ENCODE measurements at regions of chr4 and their contacts with region 1.

Region 1: GRCh38 chr4:2963175-2963965 is at the starts of genes GRK4 and NOP14:
- DNase-seq: peak; percentile 92
- ATAC-seq: peak; percentile 92
- H3K4me3 ChIP-seq: peak within 1 kb of the TSS; percentile 78
- H3K27ac ChIP-seq: peak within 1 kb of the TSS; percentile 91
- H3K4me1 ChIP-seq: peaks cover 15% of the 10 kb centered on the region
- H3K27me3 ChIP-seq: no peaks in the 10 kb centered on the region
- CTCF ChIP-seq: peak in 2 of 3 experiments; percentile 9 to 23; a peak in 3 of 6 replicates
- EP300 ChIP-seq: 0 out of 4 replicates have a peak, but pooled peaks of 1 of the 2 experiments have one; percentile 22
- POLR2A ChIP-seq: peak; percentile 90
- RAD21 ChIP-seq: no peak
- polyA plus RNA-seq, gene GRK4: 1.1 to 1.6 TPM
- polyA plus RNA-seq, gene NOP14: 13.8 to 24.7 TPM

Region 2: GRCh38 chr4:2281575-2282343 is 681.6 kb before region 1 on chr4:
- CTCF ChIA-PET with region 1: no interaction called
- POLR2A ChIA-PET with region 1: no interaction called
- RAD21 ChIA-PET with region 1: no interaction called
- SMC1A ChIA-PET with region 1: no interaction called
- in situ Hi-C with region 1: no loop called
- intact Hi-C with region 1: no loop called
- DNase-seq: peak; percentile 41
- ATAC-seq: peak; percentile 91
- H3K4me3 ChIP-seq: no peak overlapping the region
- H3K27ac ChIP-seq: no peak overlapping the region
- H3K4me1 ChIP-seq: peaks cover 7% of the 10 kb centered on the region
- H3K27me3 ChIP-seq: no peaks in the 10 kb centered on the region
- CTCF ChIP-seq: peak; percentile 15 to 27 (median 24); a peak in 4 of 6 replicates
- EP300 ChIP-seq: no peak; a peak in 1 of 4 replicates
- POLR2A ChIP-seq: 0 out of 2 replicates have a peak, but pooled peaks have one; percentile 30
- RAD21 ChIP-seq: peak; percentile 36; the same call in 1 of the 2 replicates

Region 3: DNA sequence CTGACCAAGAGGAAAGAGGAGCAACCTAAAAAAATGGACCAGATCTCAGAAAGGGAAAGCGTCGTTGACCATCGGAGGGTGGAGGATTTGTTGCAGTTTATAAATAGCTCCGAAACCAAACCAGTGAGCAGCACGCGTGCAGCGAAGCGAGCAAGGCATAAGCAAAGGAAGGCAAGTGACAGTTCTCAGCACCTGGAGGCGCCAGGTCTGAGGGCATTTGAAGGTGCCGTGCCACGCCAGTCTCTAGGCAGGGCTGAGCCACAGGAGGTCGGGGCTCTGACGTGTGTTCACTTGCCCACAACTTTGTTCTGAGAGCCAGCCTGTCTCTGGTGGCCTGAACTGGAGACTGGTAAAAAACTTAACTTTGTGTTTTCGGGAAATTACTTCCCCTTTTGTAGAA is 266.9 kb before region 1 on chr4:
- CTCF ChIA-PET with region 1: interaction called, 3 read pairs
- POLR2A ChIA-PET with region 1: no interaction called
- RAD21 ChIA-PET with region 1: no interaction called
- SMC1A ChIA-PET with region 1: no interaction called
- in situ Hi-C with region 1: no loop called
- intact Hi-C with region 1: loop called (anchors 5 kb)
- DNase-seq: peak; percentile 96
- ATAC-seq: peak; percentile 97
- H3K4me3 ChIP-seq: peak overlapping the region; percentile 22; the same call in 1 of the 2 replicates
- H3K27ac ChIP-seq: peak overlapping the region; percentile 90
- H3K4me1 ChIP-seq: peaks cover 32% of the 10 kb centered on the region
- H3K27me3 ChIP-seq: no peaks in the 10 kb centered on the region
- CTCF ChIP-seq: peak; percentile 13 to 49 (median 27); a peak in 3 of 6 replicates
- EP300 ChIP-seq: peak; percentile 75 to 94
- POLR2A ChIP-seq: peak; percentile 41; the same call in 1 of the 2 replicates
- RAD21 ChIP-seq: peak; percentile 46; the same call in 1 of the 2 replicates

Region 4: GRCh38 chr4:2843263-2843940 is 120.0 kb before region 1 on chr4 and contains the start of gene ADD1:
- CTCF ChIA-PET with region 1: no interaction called
- POLR2A ChIA-PET with region 1: interaction called, 4 read pairs
- RAD21 ChIA-PET with region 1: interaction called, 3 read pairs
- SMC1A ChIA-PET with region 1: no interaction called
- in situ Hi-C with region 1: no loop called
- intact Hi-C with region 1: loop called (anchors 5 kb)
- DNase-seq: peak; percentile 94
- ATAC-seq: peak; percentile 90
- H3K4me3 ChIP-seq: peak within 1 kb of the TSS; percentile 81
- H3K27ac ChIP-seq: peak within 1 kb of the TSS; percentile 78
- H3K4me1 ChIP-seq: peaks cover 24% of the 10 kb centered on the region
- H3K27me3 ChIP-seq: no peaks in the 10 kb centered on the region
- CTCF ChIP-seq: no peak
- EP300 ChIP-seq: no peak
- POLR2A ChIP-seq: peak; percentile 96
- RAD21 ChIP-seq: no peak
- polyA plus RNA-seq, gene ADD1: 21.6 to 50.2 TPM

Region 5: GRCh38 chr4:2925931-2926860 is 37.2 kb before region 1 on chr4:
- CTCF ChIA-PET with region 1: no interaction called
- POLR2A ChIA-PET with region 1: no interaction called
- RAD21 ChIA-PET with region 1: no interaction called
- SMC1A ChIA-PET with region 1: no interaction called
- in situ Hi-C with region 1: no loop called
- intact Hi-C with region 1: no loop called
- DNase-seq: no peak
- ATAC-seq: no peak
- H3K4me3 ChIP-seq: no peak overlapping the region
- H3K27ac ChIP-seq: no peak overlapping the region
- H3K4me1 ChIP-seq: peaks cover under 1% of the 10 kb centered on the region
- H3K27me3 ChIP-seq: no peaks in the 10 kb centered on the region
- CTCF ChIP-seq: no peak
- EP300 ChIP-seq: no peak
- POLR2A ChIP-seq: no peak
- RAD21 ChIP-seq: no peak

Region 6: GRCh38 chr4:3041192-3042142 is 78.1 kb after region 1 on chr4:
- CTCF ChIA-PET with region 1: interaction called, 17 read pairs
- POLR2A ChIA-PET with region 1: no interaction called
- RAD21 ChIA-PET with region 1: interaction called, 3 read pairs
- SMC1A ChIA-PET with region 1: interaction called, 4 read pairs
- in situ Hi-C with region 1: no loop called
- intact Hi-C with region 1: loop called (anchors 2 kb)
- DNase-seq: no peak
- ATAC-seq: peak; percentile 66
- H3K4me3 ChIP-seq: peak overlapping the region; percentile 85
- H3K27ac ChIP-seq: peak overlapping the region; percentile 95
- H3K4me1 ChIP-seq: peaks cover 66% of the 10 kb centered on the region
- H3K27me3 ChIP-seq: no peaks in the 10 kb centered on the region
- CTCF ChIP-seq: no peak
- EP300 ChIP-seq: no peak
- POLR2A ChIP-seq: peak; percentile 75; the same call in 1 of the 2 replicates
- RAD21 ChIP-seq: no peak

Measured in GM12878 (cell line).